ENCODE measurements at regions of chr7 and their contacts with region 1.

Region 1: DNA sequence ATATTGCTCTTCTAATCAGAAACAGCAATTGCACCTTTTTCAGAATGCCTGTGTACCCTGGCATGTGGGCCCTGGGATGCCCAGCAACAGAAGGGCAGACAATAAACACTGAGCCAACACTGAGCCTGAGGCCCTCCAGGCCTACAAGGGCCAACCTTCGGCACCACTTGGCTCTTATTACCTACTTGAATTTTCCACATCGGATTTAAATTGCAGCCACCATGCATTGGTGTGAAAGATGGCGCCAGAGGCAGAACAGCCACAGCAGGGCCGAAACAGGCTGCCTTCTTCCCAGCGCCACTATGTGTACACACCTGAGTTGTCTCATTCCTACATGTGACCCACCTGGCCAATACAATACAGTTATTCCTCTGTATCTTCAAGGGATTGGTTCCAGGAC is 51.4 kb upstream of the EZH2 start:
- DNase-seq: no peak
- ATAC-seq: no peak
- H3K4me3 ChIP-seq: no peak overlapping the region
- H3K27ac ChIP-seq: no peak overlapping the region
- H3K4me1 ChIP-seq: peaks cover 0 to 6% (median 3%) of the 10 kb centered on the region in 12 donors
- H3K27me3 ChIP-seq: no peaks in the 10 kb centered on the region
- CTCF ChIP-seq: no peak
- POLR2A ChIP-seq: no peak

Region 2: GRCh38 chr7:148993193-148993592 is 57.7 kb after region 1 on chr7:
- intact Hi-C with region 1: loop called in 1 of 10 experiments (anchors 2 kb)
- DNase-seq: no peak
- ATAC-seq: no peak
- H3K4me3 ChIP-seq: no peak overlapping the region
- H3K27ac ChIP-seq: no peak overlapping the region
- H3K4me1 ChIP-seq: peaks cover 0 to 4% (median 1%) of the 10 kb centered on the region in 12 donors
- H3K27me3 ChIP-seq: no peaks in the 10 kb centered on the region
- CTCF ChIP-seq: no peak
- POLR2A ChIP-seq: no peak

Region 3: GRCh38 chr7:149028346-149029109 is 93.1 kb after region 1 on chr7 and contains the start of gene PDIA4:
- intact Hi-C with region 1: no loop called
- DNase-seq: peak; percentile 99 to 100 (median 99)
- ATAC-seq: peak; percentile 97 to 99 (median 98)
- H3K4me3 ChIP-seq: peak within 1 kb of the TSS; percentile 63 to 100 (median 78)
- H3K27ac ChIP-seq: peak within 1 kb of the TSS; percentile 45 to 94 (median 87)
- H3K4me1 ChIP-seq: peaks cover 0 to 31% (median 16%) of the 10 kb centered on the region in 12 donors
- H3K27me3 ChIP-seq: no peaks in the 10 kb centered on the region
- CTCF ChIP-seq: peak in 8 of 12 donors; percentile 6 to 53 (median 26)
- POLR2A ChIP-seq: peak in 1 of 2 donors; percentile 89
- total RNA-seq, gene PDIA4: 20.9 to 67.7 (median 33.1) TPM